ENCODE measurements at regions of chr1 and their contacts with region 1.

Region 1: DNA sequence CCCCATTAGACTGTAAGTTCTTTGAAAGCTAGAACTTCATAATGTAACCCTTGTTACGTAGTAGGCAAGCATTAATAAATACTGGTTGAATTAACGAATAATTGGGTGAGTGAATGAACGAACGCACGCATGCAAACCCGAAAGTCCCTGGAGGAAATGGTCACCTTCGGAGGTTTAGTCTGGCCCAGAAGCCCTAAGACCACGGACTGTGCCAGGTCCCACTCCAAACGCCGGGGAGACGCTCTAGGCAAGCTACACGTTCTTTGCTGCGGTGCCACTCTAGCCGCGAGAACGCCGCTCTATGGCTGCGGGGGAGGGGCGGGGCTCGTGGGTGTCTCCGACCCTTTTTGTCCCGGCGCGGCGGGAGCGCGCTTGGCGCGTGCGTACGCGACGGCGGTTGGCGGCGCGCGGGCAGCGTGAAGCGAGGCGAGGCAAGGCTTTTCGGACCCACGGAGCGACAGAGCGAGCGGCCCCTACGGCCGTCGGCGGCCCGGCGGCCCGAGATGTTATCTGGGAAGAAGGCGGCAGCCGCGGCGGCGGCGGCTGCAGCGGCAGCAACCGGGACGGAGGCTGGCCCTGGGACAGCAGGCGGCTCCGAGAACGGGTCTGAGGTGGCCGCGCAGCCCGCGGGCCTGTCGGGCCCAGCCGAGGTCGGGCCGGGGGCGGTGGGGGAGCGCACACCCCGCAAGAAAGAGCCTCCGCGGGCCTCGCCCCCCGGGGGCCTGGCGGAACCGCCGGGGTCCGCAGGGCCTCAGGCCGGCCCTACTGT is at the start of gene KDM1A:
- DNase-seq: peak; percentile 94 to 97
- ATAC-seq: peak; percentile 99 to 100
- H3K4me3 ChIP-seq: peak within 1 kb of the TSS; percentile 84 to 92 (median 88)
- H3K27ac ChIP-seq: peak within 1 kb of the TSS; percentile 84 to 95 (median 92)
- H3K4me1 ChIP-seq: peaks cover 8 to 11% of the 10 kb centered on the region in 2 donors
- H3K27me3 ChIP-seq: no peaks in the 10 kb centered on the region
- CTCF ChIP-seq: no peak
- POLR2A ChIP-seq: peak; percentile 83 to 86
- total RNA-seq, gene KDM1A: 46.0 to 76.2 (median 58.7) TPM

Region 2: GRCh38 chr1:22969304-22969709 is 50.0 kb before region 1 on chr1:
- in situ Hi-C with region 1: no loop called
- intact Hi-C with region 1: no loop called
- DNase-seq: no peak
- ATAC-seq: no peak
- H3K4me3 ChIP-seq: no peak overlapping the region
- H3K27ac ChIP-seq: no peak overlapping the region
- H3K4me1 ChIP-seq: no peaks in the 10 kb centered on the region
- H3K27me3 ChIP-seq: peaks cover 22 to 46% (median 25%) of the 10 kb centered on the region in 3 donors
- CTCF ChIP-seq: no peak
- POLR2A ChIP-seq: no peak

Region 3: GRCh38 chr1:23790696-23791515 is 771.6 kb after region 1 on chr1 and contains the start of gene LYPLA2:
- in situ Hi-C with region 1: no loop called
- intact Hi-C with region 1: loop called (anchors 1 kb)
- DNase-seq: peak; percentile 87
- ATAC-seq: peak; percentile 89 to 93
- H3K4me3 ChIP-seq: peak within 1 kb of the TSS; percentile 79 to 97 (median 80)
- H3K27ac ChIP-seq: peak within 1 kb of the TSS; percentile 86 to 90 (median 87)
- H3K4me1 ChIP-seq: peaks cover 24 to 26% of the 10 kb centered on the region in 2 donors
- H3K27me3 ChIP-seq: no peaks in the 10 kb centered on the region
- CTCF ChIP-seq: no peak
- POLR2A ChIP-seq: peak in 1 of 2 donors; percentile 50
- total RNA-seq, gene LYPLA2: 35.3 to 40.9 (median 36.7) TPM

Measured in gastrocnemius medialis (tissue), 4 donors.